A549 (cell line): ENCODE measurements at regions of chr15 and their contacts with region 1.

Region 1: GRCh38 chr15:78195735-78196201 is 38.6 kb downstream of the ACSBG1 start:
- DNase-seq: peak; percentile 57 to 78
- ATAC-seq: peak; percentile 92 to 96
- H3K4me3 ChIP-seq: no peak overlapping the region
- H3K27ac ChIP-seq: no peak overlapping the region
- H3K4me1 ChIP-seq: no peaks in the 10 kb centered on the region
- CTCF ChIP-seq: peak; percentile 89
- EP300 ChIP-seq: no peak
- POLR2A ChIP-seq: no peak
- RAD21 ChIP-seq: peak; percentile 83 to 87

Region 2: GRCh38 chr15:78120523-78120922 is 75.2 kb before region 1 on chr15:
- CTCF ChIA-PET with region 1: interaction called, 71 read pairs
- POLR2A ChIA-PET with region 1: no interaction called
- DNase-seq: no peak
- ATAC-seq: no peak
- H3K4me3 ChIP-seq: no peak overlapping the region
- H3K27ac ChIP-seq: no peak overlapping the region
- H3K4me1 ChIP-seq: no peaks in the 10 kb centered on the region
- CTCF ChIP-seq: no peak
- EP300 ChIP-seq: no peak
- POLR2A ChIP-seq: no peak
- RAD21 ChIP-seq: no peak

Region 3: DNA sequence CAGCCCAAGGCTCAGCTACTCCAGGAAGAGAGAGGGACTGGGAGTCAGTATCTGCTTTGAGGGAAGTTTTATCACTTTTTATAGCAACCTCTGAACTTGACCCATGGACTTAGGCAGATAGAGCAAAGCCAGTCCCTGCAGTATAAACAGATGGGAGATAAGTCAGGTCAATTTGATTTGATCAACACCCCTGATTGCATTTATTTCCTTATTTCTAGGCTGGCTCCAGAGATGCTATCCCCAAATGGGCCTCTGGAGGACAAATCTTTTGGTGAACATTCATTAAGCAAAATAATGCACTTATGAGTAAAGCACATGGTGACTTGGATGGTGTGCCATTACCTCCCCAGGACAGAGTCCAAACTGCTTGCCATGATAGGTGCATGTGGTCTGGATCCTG is 55.5 kb before region 1 on chr15:
- CTCF ChIA-PET with region 1: interaction called, 14 read pairs
- POLR2A ChIA-PET with region 1: no interaction called
- DNase-seq: no peak
- ATAC-seq: peak in 1 of 2 experiments; percentile 48; a peak in 2 of 6 replicates
- H3K4me3 ChIP-seq: no peak overlapping the region
- H3K27ac ChIP-seq: no peak overlapping the region
- H3K4me1 ChIP-seq: no peaks in the 10 kb centered on the region
- CTCF ChIP-seq: no peak
- EP300 ChIP-seq: no peak
- POLR2A ChIP-seq: no peak
- RAD21 ChIP-seq: no peak

Region 4: DNA sequence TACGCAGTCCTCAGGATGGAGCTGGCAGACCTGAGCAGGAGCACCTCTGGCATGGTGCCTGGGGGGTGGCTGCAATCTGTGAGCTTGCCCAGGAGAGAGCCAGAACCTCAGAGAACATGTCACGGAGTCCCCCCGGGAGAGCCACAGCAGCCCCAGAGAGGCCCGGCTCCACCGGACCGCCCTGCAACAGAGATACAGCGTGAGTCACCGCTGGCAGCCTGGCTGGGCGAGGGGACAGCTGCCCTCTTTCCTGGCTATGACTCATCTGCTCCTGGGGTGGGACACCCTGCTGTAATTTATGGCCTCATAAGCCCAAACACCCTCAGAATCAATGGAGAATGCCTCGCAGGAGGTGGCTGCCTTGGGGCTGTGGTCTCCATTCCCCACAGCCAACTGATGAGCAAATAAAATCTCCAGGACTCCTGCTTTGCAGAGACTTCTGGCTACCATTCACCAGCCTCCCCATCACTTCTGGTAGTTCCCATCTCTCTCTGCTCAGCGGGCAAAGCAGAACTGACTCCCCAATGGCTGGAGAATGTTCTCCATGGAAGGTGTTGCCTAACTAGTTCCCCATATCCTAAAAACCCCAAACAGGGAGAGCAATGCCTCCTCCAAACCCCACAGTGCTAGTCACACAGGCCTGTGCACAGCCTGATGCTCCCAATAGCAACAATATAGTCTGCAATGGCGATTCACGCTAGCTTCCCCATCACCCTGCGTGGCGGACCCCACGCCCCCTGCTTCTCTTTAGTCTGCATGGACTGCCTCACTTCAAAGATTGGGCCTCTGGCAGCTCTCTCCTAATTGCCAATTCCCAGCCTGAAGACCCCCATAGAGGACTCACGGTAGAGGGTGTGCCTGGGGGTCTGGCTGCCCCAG is 17.0 kb after region 1 on chr15:
- CTCF ChIA-PET with region 1: interaction called, 72 read pairs
- POLR2A ChIA-PET with region 1: no interaction called
- DNase-seq: peak; percentile 66 to 89
- ATAC-seq: peak; percentile 82 to 88
- H3K4me3 ChIP-seq: no peak overlapping the region
- H3K27ac ChIP-seq: peak overlapping the region; percentile 52 to 69
- H3K4me1 ChIP-seq: peaks cover 56% of the 10 kb centered on the region
- CTCF ChIP-seq: no peak
- EP300 ChIP-seq: no peak
- POLR2A ChIP-seq: no peak
- RAD21 ChIP-seq: no peak